ENCODE measurements at regions of chr2 and their contacts with region 1.

Region 1: GRCh38 chr2:63432373-63432772 is 155.9 kb downstream of the WDPCP start:
- DNase-seq: no peak
- ATAC-seq: no peak
- H3K4me3 ChIP-seq: no peak overlapping the region
- H3K27ac ChIP-seq: no peak overlapping the region
- H3K4me1 ChIP-seq: no peaks in the 10 kb centered on the region
- H3K27me3 ChIP-seq: no peaks in the 10 kb centered on the region
- CTCF ChIP-seq: no peak
- POLR2A ChIP-seq: no peak

Region 2: DNA sequence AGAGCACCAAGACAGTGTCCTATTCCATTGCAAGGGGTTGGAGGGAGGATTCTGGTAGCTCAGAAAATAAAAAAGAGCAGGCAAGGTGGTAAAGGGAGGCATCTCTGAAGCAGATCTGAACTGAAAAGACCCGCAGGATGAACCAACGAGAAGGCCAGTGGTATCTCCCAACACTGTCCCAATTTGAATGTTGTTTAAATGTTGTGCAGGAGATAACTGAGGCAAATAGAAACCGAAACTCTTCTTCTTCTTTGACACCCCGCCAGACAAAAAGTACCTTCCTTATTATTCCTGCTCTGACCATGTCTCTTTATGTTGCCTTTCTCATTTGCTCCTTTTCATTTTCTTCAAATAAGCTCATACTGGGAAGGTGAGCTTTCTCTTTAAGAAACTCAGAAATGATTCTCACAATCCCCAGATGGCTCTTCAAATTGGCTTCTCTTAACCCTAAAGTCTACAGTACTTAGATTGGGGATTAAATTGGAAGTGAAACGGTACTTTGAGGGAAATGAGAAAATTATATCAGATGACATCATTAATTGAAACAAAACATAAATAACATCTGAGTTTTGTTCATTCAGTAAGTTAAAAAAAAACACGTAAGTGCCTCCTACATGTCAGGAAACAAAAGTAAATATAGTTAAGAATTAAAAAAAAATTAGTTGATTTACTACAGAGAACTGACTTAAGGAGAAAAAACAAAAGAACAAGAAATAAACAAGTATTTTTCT is 12.4 kb after region 1 on chr2:
- in situ Hi-C with region 1: no loop called
- intact Hi-C with region 1: loop called (anchors 1 kb)
- DNase-seq: no peak
- ATAC-seq: no peak
- H3K4me3 ChIP-seq: no peak overlapping the region
- H3K27ac ChIP-seq: no peak overlapping the region
- H3K4me1 ChIP-seq: no peaks in the 10 kb centered on the region
- H3K27me3 ChIP-seq: no peaks in the 10 kb centered on the region
- CTCF ChIP-seq: no peak
- POLR2A ChIP-seq: no peak